Left colon (tissue), 2 donors: ENCODE measurements at regions of chr1 and their contacts with region 1.

Region 1: DNA sequence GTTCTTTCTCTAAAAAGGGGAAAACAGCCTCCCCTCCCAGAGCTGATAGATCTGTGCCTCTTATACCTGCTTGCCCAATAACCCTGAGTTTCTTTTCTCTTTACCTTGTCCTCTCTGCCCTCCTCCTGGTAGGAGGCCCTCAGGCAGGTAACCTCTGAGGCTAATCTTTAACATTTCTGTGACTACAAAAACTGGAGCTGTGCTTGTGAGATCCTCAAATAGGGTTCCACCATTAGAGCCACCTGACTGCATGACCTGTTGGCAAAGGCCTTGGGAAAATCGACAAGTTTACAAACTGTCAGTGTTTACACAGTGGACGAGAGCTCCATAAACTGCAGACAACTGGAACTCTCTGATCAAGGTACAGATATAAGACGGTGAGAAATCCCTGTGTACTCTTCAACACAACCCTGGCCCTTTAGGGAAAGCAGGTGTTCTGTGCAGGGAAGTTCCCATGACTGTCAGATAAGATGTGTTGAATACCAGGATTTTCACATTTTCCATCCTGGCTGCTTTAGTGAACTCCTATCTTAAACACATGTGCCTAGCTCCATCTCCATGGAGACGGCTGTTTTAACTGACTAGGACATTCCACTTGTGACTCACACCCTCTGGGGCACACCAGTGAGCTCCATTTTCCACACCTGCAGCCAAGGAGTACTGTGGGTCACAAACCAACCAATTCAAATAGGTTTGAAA is 38.3 kb downstream of the ECE1 start:
- DNase-seq: peak; percentile 34 to 76
- ATAC-seq: peak; percentile 85

Region 2: DNA sequence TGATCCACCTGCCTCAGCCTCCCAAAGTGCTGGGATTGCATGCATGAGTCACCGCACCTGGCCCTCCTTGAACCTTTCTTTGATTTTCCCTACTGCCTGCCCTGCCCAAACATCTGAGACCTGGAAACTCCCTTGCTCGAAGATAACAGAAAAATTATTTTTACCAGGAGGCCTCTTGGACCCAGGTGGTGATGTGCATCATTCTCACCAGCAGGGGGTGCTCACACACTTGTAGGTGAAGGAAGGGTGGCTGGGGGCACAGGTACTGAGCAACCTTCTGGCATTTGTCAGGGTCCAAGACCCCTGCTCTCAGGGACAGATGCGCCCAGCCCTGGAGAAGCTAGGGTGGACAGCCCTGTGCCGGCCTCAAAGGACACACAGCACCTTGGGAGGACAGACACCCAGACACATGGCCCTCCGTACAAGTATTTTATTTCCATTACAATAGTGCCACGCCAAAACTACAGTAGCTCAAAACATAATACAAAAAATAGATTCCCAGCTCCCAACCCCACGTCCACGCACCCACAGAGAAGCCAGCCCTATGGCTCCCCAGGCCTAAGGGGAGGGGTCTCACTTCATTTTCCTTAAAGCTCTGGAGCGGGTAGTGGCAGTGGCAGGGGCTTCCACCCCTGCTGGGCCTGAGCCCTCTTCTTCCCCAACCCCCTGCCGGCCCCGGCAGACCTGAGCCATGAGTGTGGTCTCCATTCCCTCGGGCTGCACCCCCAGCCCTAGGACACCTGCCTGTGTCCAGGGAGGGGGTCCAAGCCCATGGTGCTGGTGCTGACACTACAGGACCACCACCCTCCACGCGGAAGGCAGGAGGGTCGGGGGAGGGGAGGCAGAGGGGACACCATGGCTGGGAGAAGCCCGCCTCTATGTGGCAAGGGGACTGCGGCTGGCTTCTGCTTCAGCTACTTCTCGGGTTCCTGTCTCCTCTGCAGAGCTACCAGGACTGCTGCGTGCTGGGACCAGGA is 34.8 kb before region 1 on chr1:
- intact Hi-C with region 1: no loop called
- DNase-seq: peak; percentile 39 to 69
- ATAC-seq: peak; percentile 63

Region 3: DNA sequence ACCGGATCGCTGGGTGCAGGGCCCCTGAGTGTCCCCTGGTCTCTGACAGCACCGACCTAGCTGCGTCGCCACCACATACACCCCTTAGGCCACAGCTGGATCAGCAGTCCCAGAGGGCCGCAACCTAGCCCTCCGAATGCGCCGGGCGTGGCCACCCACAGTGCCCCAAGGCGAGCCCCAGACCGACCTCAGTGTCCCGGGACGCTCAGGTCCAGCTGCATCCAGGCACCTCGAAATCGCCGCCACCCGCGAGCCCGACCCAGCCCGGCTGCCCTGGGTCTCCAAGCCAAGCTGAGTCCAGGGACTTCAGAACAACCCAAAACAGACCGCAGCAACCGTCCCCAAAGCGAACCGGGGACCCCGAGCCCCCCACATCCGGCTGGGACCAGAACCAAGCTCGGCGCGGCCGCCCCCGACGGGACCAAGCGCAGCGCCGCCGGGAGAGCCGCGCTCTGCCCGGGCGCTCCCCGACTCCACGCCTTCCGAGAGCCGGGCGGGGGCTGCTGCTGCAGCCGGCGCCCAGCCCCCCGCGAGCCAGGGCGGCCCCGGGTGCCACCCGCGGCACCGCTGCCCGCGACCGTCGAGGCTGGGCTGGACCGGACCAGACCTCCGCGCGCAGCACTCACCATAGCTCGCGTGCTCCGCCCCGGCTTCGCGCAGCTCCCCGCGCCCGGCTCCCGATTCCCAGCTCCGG is 93.0 kb after region 1 on chr1:
- intact Hi-C with region 1: loop called in 1 of 2 experiments (anchors 5 kb)
- DNase-seq: peak; percentile 45 to 61
- ATAC-seq: peak; percentile 35

Region 4: GRCh38 chr1:21368515-21369289 is 116.8 kb after region 1 on chr1:
- intact Hi-C with region 1: loop called in 1 of 2 experiments (anchors 5 kb)
- DNase-seq: peak; percentile 68 to 81
- ATAC-seq: peak; percentile 88

Region 5: DNA sequence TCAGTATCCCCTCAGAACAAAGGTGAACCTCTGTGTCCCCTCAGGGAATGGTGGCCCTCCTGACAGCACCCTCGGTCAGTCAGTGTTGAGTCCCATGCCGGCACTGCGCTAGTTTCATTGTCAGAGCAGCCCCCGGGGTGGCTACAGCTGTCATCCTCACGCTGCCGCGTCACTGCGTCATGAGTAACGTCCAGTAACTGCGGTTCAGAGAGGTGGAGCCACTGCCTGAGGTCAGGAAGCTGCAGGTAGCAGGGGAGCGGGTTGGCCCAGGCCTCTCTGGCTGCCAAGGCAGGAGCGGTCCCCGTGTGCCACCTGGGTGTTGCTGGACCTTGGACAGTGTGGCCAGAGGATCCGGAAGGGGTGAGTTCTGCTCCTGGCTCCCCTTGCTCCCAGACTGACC is 911.2 kb after region 1 on chr1:
- intact Hi-C with region 1: no loop called
- DNase-seq: no peak
- ATAC-seq: peak; percentile 73